ENCODE measurements at regions of chr19 and their contacts with region 1.

Region 1: GRCh38 chr19:12777217-12778016 is 2.1 kb upstream of the HOOK2 start:
- DNase-seq: no peak
- ATAC-seq: peak; percentile 41
- H3K4me3 ChIP-seq: peak overlapping the region; percentile 66 to 68
- H3K27ac ChIP-seq: peak overlapping the region; percentile 96
- H3K4me1 ChIP-seq: peaks cover 49 to 77% of the 10 kb centered on the region in 2 experiments
- H3K27me3 ChIP-seq: no peaks in the 10 kb centered on the region
- CTCF ChIP-seq: peak; percentile 87 to 95 (median 94); a peak in 5 of 6 replicates
- POLR2A ChIP-seq: no peak
- RAD21 ChIP-seq: peak; percentile 93

Region 2: GRCh38 chr19:12757544-12758274 is 19.7 kb before region 1 on chr19:
- CTCF ChIA-PET with region 1: interaction called, 36 read pairs
- POLR2A ChIA-PET with region 1: no interaction called
- RAD21 ChIA-PET with region 1: interaction called in 1 of 2 experiments, 3 read pairs
- intact Hi-C with region 1: no loop called
- DNase-seq: peak; percentile 52
- ATAC-seq: peak; percentile 87
- H3K4me3 ChIP-seq: peak overlapping the region; percentile 33 to 55
- H3K27ac ChIP-seq: peak overlapping the region; percentile 31; the same call in 1 of the 2 replicates
- H3K4me1 ChIP-seq: peaks cover 4 to 13% of the 10 kb centered on the region in 2 experiments; a peak in 3 of 4 replicates
- H3K27me3 ChIP-seq: no peaks in the 10 kb centered on the region
- CTCF ChIP-seq: peak; percentile 72 to 94 (median 88)
- POLR2A ChIP-seq: no peak
- RAD21 ChIP-seq: peak; percentile 64

Region 3: DNA sequence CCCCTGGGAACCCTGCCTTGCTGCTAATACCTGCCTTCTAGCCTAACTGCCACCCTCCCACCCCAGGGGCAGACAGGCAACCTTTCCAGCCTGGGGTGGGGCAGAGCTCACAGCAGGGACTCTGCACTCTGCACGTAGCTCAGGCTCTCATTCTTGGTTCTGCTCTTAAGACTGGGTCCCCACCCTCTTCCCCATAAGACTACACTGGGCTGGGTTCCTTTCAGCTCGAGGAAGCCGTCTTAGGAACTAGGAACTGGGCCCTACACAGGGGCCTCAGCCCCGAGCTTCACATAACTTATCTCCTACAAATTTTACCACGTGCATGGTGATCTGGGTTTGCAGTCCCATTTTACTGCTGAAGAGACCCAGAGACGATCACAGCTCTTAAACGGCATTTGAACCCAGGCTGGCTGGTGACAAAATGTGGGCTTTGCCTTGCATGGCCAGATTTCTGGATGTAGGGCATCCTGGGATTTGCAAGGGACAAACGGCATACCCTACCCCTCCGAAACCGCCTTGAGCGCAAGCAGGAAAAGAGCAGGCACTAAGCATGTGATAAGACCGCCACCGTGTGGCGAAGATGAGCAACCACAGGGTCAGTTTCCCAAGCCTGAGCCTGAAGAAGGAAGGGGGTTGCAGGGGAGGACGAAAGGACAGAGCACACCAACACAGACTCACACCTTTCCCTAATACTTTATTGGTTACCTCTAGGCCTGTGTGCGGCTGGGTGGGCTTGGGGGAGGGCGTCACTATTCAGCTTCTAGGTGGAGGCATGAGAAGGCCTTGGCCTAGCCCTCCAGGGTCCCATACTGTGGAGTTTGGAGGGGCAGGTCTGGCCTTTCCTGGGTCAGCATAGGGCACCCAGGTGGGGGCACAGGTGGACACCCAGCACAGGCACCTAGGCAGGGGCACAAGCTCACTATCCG is 19.0 kb after region 1 on chr19:
- CTCF ChIA-PET with region 1: interaction called, 88 read pairs
- POLR2A ChIA-PET with region 1: interaction called, 172 read pairs
- RAD21 ChIA-PET with region 1: interaction called, 12 to 15 read pairs
- intact Hi-C with region 1: loop called (anchors 1 kb)
- DNase-seq: no peak
- ATAC-seq: peak; percentile 32
- H3K4me3 ChIP-seq: peak overlapping the region in 1 of 2 experiments; percentile 33; a peak in 1 of 4 replicates
- H3K27ac ChIP-seq: peak overlapping the region; percentile 70
- H3K4me1 ChIP-seq: peaks cover 29 to 68% of the 10 kb centered on the region in 2 experiments
- H3K27me3 ChIP-seq: no peaks in the 10 kb centered on the region
- CTCF ChIP-seq: peak in 2 of 3 experiments; percentile 93 to 94; a peak in 4 of 6 replicates
- POLR2A ChIP-seq: peak; percentile 0
- RAD21 ChIP-seq: no peak

Region 4: DNA sequence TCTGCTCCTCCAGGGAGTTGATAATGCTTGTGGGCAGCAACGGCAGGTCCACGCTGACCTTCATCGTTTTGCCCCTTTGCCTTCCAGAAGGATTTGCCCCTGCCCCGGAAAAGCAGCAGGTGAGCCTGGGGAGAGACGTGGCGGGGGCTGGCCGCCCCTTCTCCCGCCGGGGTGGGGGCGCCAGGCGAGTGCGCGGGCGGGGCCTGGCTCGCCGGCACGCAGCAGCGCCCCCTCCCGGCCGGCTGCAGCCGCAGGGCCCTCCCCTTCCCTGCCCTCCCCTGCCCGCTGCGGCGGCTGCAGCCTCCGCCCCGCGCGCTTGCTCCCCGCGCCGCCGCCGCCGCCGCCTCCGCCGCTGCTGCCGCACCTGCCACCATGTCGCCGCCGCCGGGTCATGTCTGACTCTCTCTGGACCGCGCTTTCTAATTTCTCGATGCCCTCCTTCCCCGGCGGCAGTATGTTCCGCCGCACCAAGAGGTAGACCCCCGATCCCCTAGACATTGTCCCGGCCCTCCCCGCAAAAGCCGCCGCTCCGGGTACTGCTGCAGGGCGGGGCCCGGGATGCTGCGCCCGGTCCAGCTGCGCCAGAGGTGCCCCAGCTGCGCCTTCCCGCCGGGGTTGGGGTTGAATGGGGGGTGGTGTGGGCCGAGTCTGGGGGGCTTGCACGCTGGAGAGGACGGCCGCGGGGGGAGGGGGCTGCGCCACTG is 60.9 kb after region 1 on chr19 and contains the start of gene MAST1:
- CTCF ChIA-PET with region 1: interaction called, 12 read pairs
- POLR2A ChIA-PET with region 1: interaction called, 3 read pairs
- RAD21 ChIA-PET with region 1: no interaction called
- intact Hi-C with region 1: no loop called
- DNase-seq: no peak
- ATAC-seq: peak; percentile 50
- H3K4me3 ChIP-seq: peak within 1 kb of the TSS; percentile 61 to 88
- H3K27ac ChIP-seq: peak within 1 kb of the TSS; percentile 69
- H3K4me1 ChIP-seq: peaks cover 39 to 67% of the 10 kb centered on the region in 2 experiments
- H3K27me3 ChIP-seq: no peaks in the 10 kb centered on the region
- CTCF ChIP-seq: peak in 2 of 3 experiments; percentile 45 to 53; a peak in 4 of 6 replicates
- POLR2A ChIP-seq: no peak
- RAD21 ChIP-seq: no peak
- total RNA-seq, gene MAST1: 28.9 TPM

Region 5: GRCh38 chr19:12847159-12848139 is 70.0 kb after region 1 on chr19:
- CTCF ChIA-PET with region 1: interaction called, 8 read pairs
- POLR2A ChIA-PET with region 1: no interaction called
- RAD21 ChIA-PET with region 1: interaction called in 1 of 2 experiments, 3 read pairs
- intact Hi-C with region 1: loop called (anchors 5 kb)
- DNase-seq: no peak
- ATAC-seq: peak; percentile 99
- H3K4me3 ChIP-seq: no peak overlapping the region
- H3K27ac ChIP-seq: peak overlapping the region; percentile 22; the same call in 1 of the 2 replicates
- H3K4me1 ChIP-seq: peaks cover 4 to 18% of the 10 kb centered on the region in 2 experiments; a peak in 3 of 4 replicates
- H3K27me3 ChIP-seq: no peaks in the 10 kb centered on the region
- CTCF ChIP-seq: peak; percentile 81 to 98 (median 95)
- POLR2A ChIP-seq: no peak
- RAD21 ChIP-seq: peak; percentile 96